Common myeloid progenitor, CD34-positive (primary cell): ENCODE measurements at regions of chr1 and their contacts with region 1.

Region 1: GRCh38 chr1:24186993-24187805 is at the start of gene IFNLR1:
- DNase-seq: peak in 2 of 3 donors; percentile 24 to 41
- H3K4me3 ChIP-seq: peak within 1 kb of the TSS in 6 of 7 experiments; percentile 34 to 72 (median 48)
- H3K27ac ChIP-seq: no peak within 1 kb of the TSS
- H3K4me1 ChIP-seq: peaks cover 8 to 26% (median 21%) of the 10 kb centered on the region in 4 experiments
- H3K27me3 ChIP-seq: peaks cover 0 to 44% (median 23%) of the 10 kb centered on the region in 5 experiments

Region 2: GRCh38 chr1:24094554-24094953 is 92.6 kb before region 1 on chr1:
- CTCF ChIA-PET with region 1: no interaction called
- POLR2A ChIA-PET with region 1: no interaction called
- DNase-seq: no peak
- H3K4me3 ChIP-seq: no peak overlapping the region
- H3K27ac ChIP-seq: no peak overlapping the region
- H3K4me1 ChIP-seq: no peaks in the 10 kb centered on the region
- H3K27me3 ChIP-seq: peaks cover 0 to 5% (median 0%) of the 10 kb centered on the region in 5 experiments

Region 3: GRCh38 chr1:24150234-24151174 is 36.7 kb before region 1 on chr1:
- CTCF ChIA-PET with region 1: interaction called, 10 read pairs
- POLR2A ChIA-PET with region 1: interaction called, 4 read pairs
- DNase-seq: peak; percentile 75 to 86 (median 83)
- H3K4me3 ChIP-seq: peak overlapping the region in 4 of 7 experiments; percentile 8 to 59 (median 18)
- H3K27ac ChIP-seq: no peak overlapping the region
- H3K4me1 ChIP-seq: peaks cover 0 to 12% (median 5%) of the 10 kb centered on the region in 4 experiments
- H3K27me3 ChIP-seq: peaks cover 2 to 40% (median 23%) of the 10 kb centered on the region in 5 experiments